Endothelial cell of umbilical vein (primary cell): ENCODE measurements at regions of chr20 and their contacts with region 1.

Region 1: GRCh38 chr20:43448748-43449535 is 8.8 kb upstream of the SRSF6 start:
- DNase-seq: peak; percentile 78
- H3K4me3 ChIP-seq: no peak overlapping the region
- H3K27ac ChIP-seq: no peak overlapping the region
- H3K4me1 ChIP-seq: peaks cover 7% of the 10 kb centered on the region
- H3K27me3 ChIP-seq: peaks cover 10 to 16% of the 10 kb centered on the region in 2 experiments
- CTCF ChIP-seq: peak; percentile 67 to 68
- POLR2A ChIP-seq: no peak

Region 2: DNA sequence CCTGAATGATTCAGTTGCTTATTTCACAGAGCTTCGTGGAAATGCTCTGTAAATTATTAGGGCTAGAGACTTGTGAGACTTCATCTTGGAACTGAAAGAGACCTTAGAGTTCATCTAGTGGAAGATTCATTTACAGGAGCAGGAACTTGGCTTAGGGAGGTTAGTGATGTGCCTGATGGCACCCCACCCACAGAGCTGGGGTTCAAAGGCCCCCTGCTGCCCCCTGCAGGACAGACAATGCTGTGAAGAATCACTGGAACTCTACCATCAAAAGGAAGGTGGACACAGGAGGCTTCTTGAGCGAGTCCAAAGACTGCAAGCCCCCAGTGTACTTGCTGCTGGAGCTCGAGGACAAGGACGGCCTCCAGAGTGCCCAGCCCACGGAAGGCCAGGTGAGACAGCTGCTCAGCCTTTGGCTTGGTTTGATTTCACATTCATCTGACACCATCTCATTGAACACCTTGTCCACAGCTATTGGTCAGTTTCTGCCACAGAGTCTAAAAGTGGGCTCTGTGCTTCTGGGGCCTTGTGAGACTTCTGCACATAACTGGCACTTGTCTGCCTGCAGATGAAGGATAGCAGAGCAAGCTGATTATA is 243.1 kb after region 1 on chr20:
- CTCF ChIA-PET with region 1: interaction called, 39 read pairs
- POLR2A ChIA-PET with region 1: no interaction called
- dilution Hi-C with region 1: no loop called
- intact Hi-C with region 1: loop called (anchors 1 kb)
- DNase-seq: peak; percentile 37
- H3K4me3 ChIP-seq: no peak overlapping the region
- H3K27ac ChIP-seq: no peak overlapping the region
- H3K4me1 ChIP-seq: no peaks in the 10 kb centered on the region
- H3K27me3 ChIP-seq: no peaks in the 10 kb centered on the region
- CTCF ChIP-seq: peak; percentile 64 to 68
- POLR2A ChIP-seq: no peak